Ovary (tissue), 10 donors: ENCODE measurements at regions of chrX and their contacts with region 1.

Region 1: GRCh38 chrX:106208154-106208553 is 40.0 kb downstream of the PWWP3B start:
- DNase-seq: no peak
- H3K4me3 ChIP-seq: no peak overlapping the region
- H3K27ac ChIP-seq: no peak overlapping the region
- H3K4me1 ChIP-seq: no peaks in the 10 kb centered on the region
- H3K27me3 ChIP-seq: no peaks in the 10 kb centered on the region
- CTCF ChIP-seq: no peak
- EP300 ChIP-seq: no peak
- POLR2A ChIP-seq: no peak

Region 2: GRCh38 chrX:105471597-105471996 is 736.6 kb before region 1 on chrX:
- intact Hi-C with region 1: loop called in 1 of 4 experiments (anchors 5 kb)
- DNase-seq: no peak
- H3K4me3 ChIP-seq: no peak overlapping the region
- H3K27ac ChIP-seq: no peak overlapping the region
- H3K4me1 ChIP-seq: no peaks in the 10 kb centered on the region
- H3K27me3 ChIP-seq: no peaks in the 10 kb centered on the region
- CTCF ChIP-seq: no peak
- EP300 ChIP-seq: no peak
- POLR2A ChIP-seq: no peak

Region 3: DNA sequence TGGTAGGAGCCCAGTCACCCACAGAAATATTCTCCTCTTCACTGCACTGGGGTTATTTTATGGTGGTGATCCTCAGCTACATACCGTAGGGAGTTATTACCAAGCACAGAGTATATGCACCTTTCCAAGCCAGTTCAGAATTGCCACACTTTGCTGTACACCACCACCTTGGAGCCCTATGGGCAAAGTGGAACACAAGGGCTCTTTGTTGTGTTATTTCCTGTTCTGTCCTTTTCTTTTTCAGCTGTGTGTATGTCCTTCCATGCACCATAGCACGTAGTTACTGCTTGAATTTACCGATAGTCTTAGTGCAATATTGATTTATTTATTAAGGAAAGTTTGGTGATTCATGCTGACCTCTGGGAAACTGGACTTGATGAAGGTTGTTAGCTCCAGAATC is 526.7 kb after region 1 on chrX:
- intact Hi-C with region 1: no loop called
- DNase-seq: no peak
- H3K4me3 ChIP-seq: no peak overlapping the region
- H3K27ac ChIP-seq: no peak overlapping the region
- H3K4me1 ChIP-seq: no peaks in the 10 kb centered on the region
- H3K27me3 ChIP-seq: no peaks in the 10 kb centered on the region
- CTCF ChIP-seq: no peak
- EP300 ChIP-seq: no peak
- POLR2A ChIP-seq: no peak